ENCODE measurements at regions of chr5 and their contacts with region 1.

Region 1: GRCh38 chr5:133111299-133111698 is 59.5 kb downstream of the HSPA4 start:
- DNase-seq: peak; percentile 92
- H3K4me3 Mint-ChIP-seq: no peak overlapping the region
- H3K27ac Mint-ChIP-seq: no peak overlapping the region
- H3K4me1 Mint-ChIP-seq: peaks cover 24% of the 10 kb centered on the region
- H3K27me3 Mint-ChIP-seq: no peaks in the 10 kb centered on the region
- CTCF ChIP-seq: peak; percentile 99

Region 2: DNA sequence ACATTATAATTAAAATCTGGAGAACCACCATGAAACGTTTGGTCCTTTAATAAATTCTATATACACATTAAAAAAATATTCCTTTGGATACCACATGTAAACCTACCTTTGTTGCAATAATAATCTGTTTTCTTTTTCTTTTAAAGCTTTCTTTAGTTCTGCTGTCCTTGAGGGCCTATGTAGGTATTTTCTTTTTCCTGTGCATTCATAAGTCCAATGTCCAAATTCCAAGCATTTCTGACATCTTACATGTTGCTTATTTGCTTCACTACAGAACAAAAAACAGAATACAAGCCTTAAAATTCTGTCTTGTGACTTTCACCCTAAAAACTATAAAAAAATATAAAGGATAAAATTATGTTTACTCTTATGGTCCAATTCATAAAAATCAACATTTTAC is 104.6 kb before region 1 on chr5:
- CTCF ChIA-PET with region 1: no interaction called
- POLR2A ChIA-PET with region 1: no interaction called
- intact Hi-C with region 1: no loop called
- DNase-seq: no peak
- H3K4me3 Mint-ChIP-seq: no peak overlapping the region
- H3K27ac Mint-ChIP-seq: no peak overlapping the region
- H3K4me1 Mint-ChIP-seq: no peaks in the 10 kb centered on the region
- H3K27me3 Mint-ChIP-seq: no peaks in the 10 kb centered on the region
- CTCF ChIP-seq: no peak

Region 3: GRCh38 chr5:133123297-133123696 is 12.0 kb after region 1 on chr5:
- CTCF ChIA-PET with region 1: interaction called, 16 read pairs
- POLR2A ChIA-PET with region 1: interaction called, 7 read pairs
- intact Hi-C with region 1: no loop called
- DNase-seq: no peak
- H3K4me3 Mint-ChIP-seq: no peak overlapping the region
- H3K27ac Mint-ChIP-seq: no peak overlapping the region
- H3K4me1 Mint-ChIP-seq: no peaks in the 10 kb centered on the region
- H3K27me3 Mint-ChIP-seq: no peaks in the 10 kb centered on the region
- CTCF ChIP-seq: no peak

Region 4: DNA sequence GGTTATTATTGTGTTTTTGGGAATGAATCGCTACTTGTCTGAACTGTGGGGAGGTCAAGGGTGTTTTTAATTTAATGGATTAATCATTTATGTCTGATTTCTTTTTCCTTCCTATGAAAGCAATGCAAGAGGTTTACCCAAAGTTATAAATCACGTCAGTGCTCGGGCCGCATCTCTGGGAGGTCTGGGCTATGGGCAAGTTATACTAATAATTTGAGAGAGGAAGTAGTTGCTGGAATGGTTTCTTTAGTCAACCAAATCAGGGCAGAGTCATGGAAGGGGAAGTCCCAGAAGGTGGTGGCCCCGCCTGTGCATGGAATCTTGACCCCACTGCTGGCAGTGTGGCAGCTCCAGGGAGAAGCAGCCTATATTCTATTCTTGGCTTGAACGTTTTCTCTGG is 120.7 kb after region 1 on chr5:
- CTCF ChIA-PET with region 1: interaction called, 23 read pairs
- POLR2A ChIA-PET with region 1: interaction called, 11 read pairs
- intact Hi-C with region 1: loop called (anchors 1 kb)
- DNase-seq: peak; percentile 31
- H3K4me3 Mint-ChIP-seq: no peak overlapping the region
- H3K27ac Mint-ChIP-seq: no peak overlapping the region
- H3K4me1 Mint-ChIP-seq: peaks cover 59% of the 10 kb centered on the region
- H3K27me3 Mint-ChIP-seq: no peaks in the 10 kb centered on the region
- CTCF ChIP-seq: no peak

Region 5: GRCh38 chr5:133287500-133287899 is 176.2 kb after region 1 on chr5:
- CTCF ChIA-PET with region 1: interaction called, 141 read pairs
- POLR2A ChIA-PET with region 1: interaction called, 32 read pairs
- intact Hi-C with region 1: loop called (anchors 1 kb)
- DNase-seq: peak; percentile 67
- H3K4me3 Mint-ChIP-seq: no peak overlapping the region
- H3K27ac Mint-ChIP-seq: no peak overlapping the region
- H3K4me1 Mint-ChIP-seq: peaks cover 38% of the 10 kb centered on the region
- H3K27me3 Mint-ChIP-seq: no peaks in the 10 kb centered on the region
- CTCF ChIP-seq: peak; percentile 66

Region 6: DNA sequence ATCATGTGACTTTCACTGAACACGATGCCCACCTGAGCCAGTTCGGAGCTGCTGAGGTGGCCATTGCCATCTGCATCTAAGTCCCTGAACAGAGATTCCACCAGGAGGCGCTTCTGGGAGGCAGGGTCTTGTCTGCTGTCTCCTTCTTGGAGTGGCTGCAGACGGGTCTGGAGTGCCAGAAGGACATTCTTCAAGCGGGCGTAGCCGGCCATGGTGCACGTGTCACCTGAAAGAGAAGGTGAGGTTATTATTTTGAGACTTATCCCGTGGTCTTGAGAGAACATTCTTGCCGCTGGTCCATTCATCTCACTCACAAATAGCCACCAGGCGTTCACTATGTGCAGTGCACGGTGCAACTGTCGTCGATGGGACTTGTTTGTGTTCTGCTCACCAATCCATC is 205.1 kb after region 1 on chr5:
- CTCF ChIA-PET with region 1: interaction called, 82 read pairs
- POLR2A ChIA-PET with region 1: interaction called, 8 read pairs
- intact Hi-C with region 1: loop called (anchors 1 kb)
- DNase-seq: peak; percentile 40
- H3K4me3 Mint-ChIP-seq: no peak overlapping the region
- H3K27ac Mint-ChIP-seq: no peak overlapping the region
- H3K4me1 Mint-ChIP-seq: no peaks in the 10 kb centered on the region
- H3K27me3 Mint-ChIP-seq: no peaks in the 10 kb centered on the region
- CTCF ChIP-seq: no peak

Region 7: GRCh38 chr5:133460172-133460758 is 349.0 kb after region 1 on chr5:
- CTCF ChIA-PET with region 1: interaction called, 8 read pairs
- POLR2A ChIA-PET with region 1: no interaction called
- intact Hi-C with region 1: loop called (anchors 1 kb)
- DNase-seq: peak; percentile 62
- H3K4me3 Mint-ChIP-seq: no peak overlapping the region
- H3K27ac Mint-ChIP-seq: no peak overlapping the region
- H3K4me1 Mint-ChIP-seq: peaks cover 21% of the 10 kb centered on the region
- H3K27me3 Mint-ChIP-seq: no peaks in the 10 kb centered on the region
- CTCF ChIP-seq: peak; percentile 95

Region 8: DNA sequence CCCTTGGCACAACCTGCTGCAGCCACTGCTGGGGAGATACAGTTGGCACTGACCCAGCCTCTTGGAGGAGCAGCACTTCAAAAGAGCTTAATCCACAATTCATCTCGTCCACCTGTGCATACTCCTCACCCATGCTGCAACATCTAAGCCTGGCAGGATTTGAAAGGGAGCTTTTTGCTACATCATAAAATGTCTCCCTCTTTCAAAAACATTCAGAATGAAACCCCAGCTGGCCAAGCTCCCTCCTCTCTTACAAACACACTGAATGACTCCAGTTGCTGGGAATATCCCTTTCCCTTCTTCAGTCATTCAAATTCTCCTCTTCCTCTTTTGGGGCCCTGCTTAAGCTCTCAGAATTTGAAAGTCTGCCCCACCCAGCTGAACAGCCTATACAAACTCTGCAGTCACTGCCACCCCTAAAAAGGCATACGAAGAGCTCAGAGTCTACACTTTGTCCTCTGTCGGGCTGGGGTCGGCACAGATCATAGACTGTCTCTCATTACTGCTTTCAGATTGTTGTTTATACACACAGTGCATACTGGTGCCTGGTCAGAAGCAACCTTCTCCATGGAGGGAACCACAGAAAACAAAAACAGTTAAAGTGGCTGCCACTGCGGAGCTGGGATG is 866.0 kb after region 1 on chr5:
- CTCF ChIA-PET with region 1: interaction called, 11 read pairs
- POLR2A ChIA-PET with region 1: interaction called, 3 read pairs
- intact Hi-C with region 1: no loop called
- DNase-seq: no peak
- H3K4me3 Mint-ChIP-seq: no peak overlapping the region
- H3K27ac Mint-ChIP-seq: peak overlapping the region; percentile 49
- H3K4me1 Mint-ChIP-seq: no peaks in the 10 kb centered on the region
- H3K27me3 Mint-ChIP-seq: no peaks in the 10 kb centered on the region
- CTCF ChIP-seq: no peak

Region 9: DNA sequence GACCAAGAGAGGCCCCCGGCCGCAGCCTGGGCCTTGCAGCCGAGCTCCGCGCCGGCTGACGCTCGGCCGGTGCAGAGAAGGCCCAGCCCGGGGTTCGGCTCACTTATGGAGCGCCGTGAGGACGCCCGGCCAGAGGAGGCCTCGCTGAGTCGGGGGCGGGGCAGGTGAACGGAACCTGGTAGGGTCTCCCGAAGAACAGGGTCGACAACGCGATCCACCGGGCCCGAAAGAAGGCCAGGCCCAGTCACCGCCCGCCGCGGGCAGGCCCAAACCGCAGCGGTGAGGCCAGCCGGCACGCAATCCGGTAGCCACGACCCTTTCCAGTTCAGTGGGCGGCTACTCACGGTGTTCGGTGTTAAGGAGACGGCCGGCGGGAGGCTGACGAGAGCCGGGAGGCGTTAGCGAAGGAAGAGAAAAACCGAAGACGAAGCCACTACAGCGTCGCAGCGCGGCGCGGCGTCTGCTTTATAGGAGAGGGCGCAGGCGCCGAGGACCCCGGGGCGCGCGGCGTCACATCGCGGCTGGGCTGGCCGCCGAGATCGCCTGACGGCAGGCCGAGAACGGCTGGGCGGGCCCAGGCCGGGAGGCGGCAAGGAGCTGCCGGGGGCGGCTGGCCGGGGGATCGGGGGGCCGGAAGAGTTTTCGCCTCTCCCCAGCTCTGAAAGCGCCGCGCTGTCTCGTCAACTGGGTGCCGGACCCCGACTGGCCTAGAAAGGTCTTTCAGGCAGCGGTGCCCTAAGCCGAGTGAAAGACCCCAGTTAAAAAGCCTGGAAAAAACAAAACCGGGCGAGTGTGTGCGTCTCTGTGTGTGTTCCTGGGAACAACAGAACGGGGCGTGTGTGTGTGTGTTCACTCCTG is 1065.4 kb after region 1 on chr5 and contains the start of gene SKP1:
- CTCF ChIA-PET with region 1: no interaction called
- POLR2A ChIA-PET with region 1: no interaction called
- intact Hi-C with region 1: no loop called
- DNase-seq: peak; percentile 89
- H3K4me3 Mint-ChIP-seq: peak within 1 kb of the TSS; percentile 97
- H3K27ac Mint-ChIP-seq: peak within 1 kb of the TSS; percentile 97
- H3K4me1 Mint-ChIP-seq: peaks cover 28% of the 10 kb centered on the region
- H3K27me3 Mint-ChIP-seq: no peaks in the 10 kb centered on the region
- CTCF ChIP-seq: no peak
- total RNA-seq, gene SKP1: 415 and 488 TPM in 2 replicates